ENCODE measurements at regions of chr2 and their contacts with region 1.

Region 1: GRCh38 chr2:217650716-217651360 is 352.0 kb downstream of the TNS1 start:
- DNase-seq: peak in 1 of 2 donors; percentile 65
- ATAC-seq: peak in 7 of 8 donors; percentile 57 to 86 (median 79)
- H3K4me3 ChIP-seq: no peak overlapping the region
- H3K27ac ChIP-seq: no peak overlapping the region
- H3K4me1 ChIP-seq: peaks cover 0 to 17% (median 3%) of the 10 kb centered on the region in 9 donors
- H3K27me3 ChIP-seq: no peaks in the 10 kb centered on the region
- CTCF ChIP-seq: peak; percentile 52 to 84 (median 78)

Region 2: GRCh38 chr2:217279556-217279955 is 371.3 kb before region 1 on chr2:
- intact Hi-C with region 1: loop called in 1 of 10 experiments (anchors 1 kb)
- DNase-seq: peak in 1 of 2 donors; percentile 18
- ATAC-seq: peak; percentile 69 to 90 (median 81)
- H3K4me3 ChIP-seq: no peak overlapping the region
- H3K27ac ChIP-seq: peak overlapping the region in 8 of 10 donors; percentile 12 to 75 (median 48)
- H3K4me1 ChIP-seq: peaks cover 6 to 47% (median 31%) of the 10 kb centered on the region in 9 donors
- H3K27me3 ChIP-seq: peaks cover 0 to 8% (median 0%) of the 10 kb centered on the region in 7 donors
- CTCF ChIP-seq: no peak

Region 3: DNA sequence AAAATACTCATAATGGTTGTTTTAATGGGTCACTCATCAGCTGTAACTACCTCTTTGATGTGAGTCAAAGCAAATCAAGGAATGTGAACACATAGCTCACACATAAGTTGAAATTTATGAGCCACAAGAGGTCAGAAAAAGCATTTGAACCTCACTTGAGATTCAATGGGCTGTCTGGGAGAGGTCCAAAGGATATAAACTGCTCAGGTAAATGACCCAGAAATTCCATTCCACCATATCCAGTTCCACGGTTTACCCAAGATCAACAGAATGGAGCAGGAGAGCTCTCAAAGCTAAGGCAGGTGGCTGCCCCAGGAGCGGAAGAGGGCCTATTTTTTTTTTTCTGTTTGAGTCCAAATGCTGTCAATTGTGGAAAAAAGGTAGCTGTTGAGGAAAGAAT is 112.1 kb before region 1 on chr2:
- intact Hi-C with region 1: loop called in 1 of 10 experiments (anchors 10 kb)
- DNase-seq: no peak
- ATAC-seq: no peak
- H3K4me3 ChIP-seq: no peak overlapping the region
- H3K27ac ChIP-seq: no peak overlapping the region
- H3K4me1 ChIP-seq: peaks cover 0 to 24% (median 0%) of the 10 kb centered on the region in 9 donors
- H3K27me3 ChIP-seq: no peaks in the 10 kb centered on the region
- CTCF ChIP-seq: no peak

Region 4: DNA sequence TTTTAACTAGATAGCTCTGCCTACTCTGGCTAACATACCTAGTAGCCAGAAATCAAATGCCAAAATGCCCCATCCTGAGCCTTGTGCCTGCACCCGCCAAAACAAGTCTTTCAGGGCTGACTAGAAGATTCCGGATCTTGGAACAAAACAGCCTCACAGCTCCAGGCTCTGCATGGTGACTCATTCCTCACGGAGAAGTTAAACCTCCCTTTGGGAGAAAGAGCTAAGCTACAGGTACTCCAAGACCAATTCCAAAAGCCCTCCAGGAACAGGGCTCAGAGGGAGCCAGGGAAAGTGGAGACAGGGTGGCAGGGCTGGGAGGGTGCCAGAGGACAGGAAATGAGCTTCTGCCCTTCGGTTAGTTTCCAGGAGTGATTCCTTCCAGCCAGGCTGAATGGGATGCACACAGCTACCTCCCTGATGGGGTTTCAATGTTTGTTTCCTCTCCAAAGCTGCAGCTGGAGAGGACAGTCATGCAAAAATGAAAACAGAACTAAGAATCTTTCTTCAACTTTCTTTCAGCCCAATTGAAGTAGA is 56.4 kb after region 1 on chr2:
- intact Hi-C with region 1: loop called in 5 of 10 experiments (anchors 2 to 5 kb)
- DNase-seq: peak in 1 of 2 donors; percentile 11
- ATAC-seq: peak; percentile 30 to 71 (median 54)
- H3K4me3 ChIP-seq: no peak overlapping the region
- H3K27ac ChIP-seq: peak overlapping the region in 4 of 10 donors; percentile 16 to 37 (median 28)
- H3K4me1 ChIP-seq: peaks cover 0 to 12% (median 9%) of the 10 kb centered on the region in 9 donors
- H3K27me3 ChIP-seq: no peaks in the 10 kb centered on the region
- CTCF ChIP-seq: no peak

Region 5: DNA sequence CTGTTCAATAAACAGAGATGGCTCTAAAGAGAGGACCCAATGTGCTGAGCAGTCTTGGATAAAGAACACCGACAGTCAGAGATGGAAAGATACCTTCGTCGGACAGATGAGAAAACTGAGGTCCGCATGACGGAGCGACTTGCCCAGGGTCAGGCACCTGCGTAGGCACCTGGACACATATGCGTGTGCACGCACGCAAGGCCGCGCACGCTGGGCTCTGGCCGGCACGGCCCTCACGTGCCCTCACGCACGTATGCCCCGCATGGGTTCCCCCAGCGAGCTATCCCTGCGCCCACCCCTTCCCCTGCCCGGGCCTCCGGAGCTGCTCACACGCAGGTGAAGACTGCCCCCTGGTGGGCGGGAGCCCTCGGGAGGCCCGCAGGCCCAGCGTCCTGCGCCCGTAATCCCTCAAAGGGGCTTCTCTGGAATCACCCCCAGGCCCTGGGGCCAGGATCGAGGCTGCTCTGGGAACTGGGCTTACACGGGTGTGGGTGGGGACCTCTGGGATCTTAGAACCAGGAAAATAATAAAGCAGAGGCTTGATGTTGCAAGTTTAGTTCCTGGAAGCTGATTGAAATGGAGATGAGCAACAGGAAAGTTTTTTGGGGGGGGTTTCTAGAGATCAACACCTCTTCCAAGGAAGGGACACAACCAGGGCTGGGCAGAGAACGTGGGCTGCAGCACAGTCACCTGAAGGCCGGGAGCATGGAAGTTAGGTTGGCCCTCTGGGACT is 105.7 kb after region 1 on chr2:
- intact Hi-C with region 1: loop called in 4 of 10 experiments (anchors 2 to 5 kb)
- DNase-seq: peak; percentile 72 to 78
- ATAC-seq: peak; percentile 75 to 91 (median 88)
- H3K4me3 ChIP-seq: peak overlapping the region in 6 of 10 donors; percentile 9 to 40 (median 31)
- H3K27ac ChIP-seq: no peak overlapping the region
- H3K4me1 ChIP-seq: peaks cover 5 to 22% (median 10%) of the 10 kb centered on the region in 9 donors
- H3K27me3 ChIP-seq: peaks cover 0 to 8% (median 0%) of the 10 kb centered on the region in 7 donors
- CTCF ChIP-seq: peak; percentile 90 to 99 (median 94)